Activated CD4-positive, alpha-beta T cell treated with anti-CD3 and anti-CD28 coated beads, Interleukin-2, amount 10 ng/mL, durations not matched to agents 24 days and 14 days (primary cell): ENCODE measurements at regions of chr14 and their contacts with region 1.

Region 1: GRCh38 chr14:76876076-76876475 is 49.9 kb downstream of the LRRC74A start:
- DNase-seq: peak; percentile 82
- H3K4me3 Mint-ChIP-seq: no peak overlapping the region
- H3K27ac Mint-ChIP-seq: no peak overlapping the region
- H3K4me1 Mint-ChIP-seq: peaks cover 2% of the 10 kb centered on the region
- H3K27me3 Mint-ChIP-seq: peaks cover 3% of the 10 kb centered on the region

Region 2: DNA sequence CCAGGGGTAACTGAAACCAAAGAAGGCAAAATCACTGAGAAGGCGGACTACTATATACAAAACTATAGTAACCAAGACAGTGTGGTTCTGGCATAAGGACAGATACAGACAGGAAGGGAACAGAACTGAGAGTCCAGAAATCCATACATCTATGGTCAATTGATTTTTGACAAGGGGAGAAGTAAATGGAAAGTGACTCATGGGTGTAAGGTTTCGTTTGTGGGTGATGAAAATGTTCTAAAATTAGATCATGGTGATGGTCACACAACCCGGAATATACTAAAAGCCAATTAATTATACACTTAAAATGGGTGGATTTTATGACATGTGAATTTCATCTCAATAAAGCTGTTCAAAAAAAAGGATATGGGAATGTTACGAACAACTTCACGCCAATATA is 82.1 kb before region 1 on chr14:
- intact Hi-C with region 1: no loop called
- DNase-seq: no peak
- H3K4me3 Mint-ChIP-seq: no peak overlapping the region
- H3K27ac Mint-ChIP-seq: no peak overlapping the region
- H3K4me1 Mint-ChIP-seq: no peaks in the 10 kb centered on the region
- H3K27me3 Mint-ChIP-seq: no peaks in the 10 kb centered on the region

Region 3: GRCh38 chr14:76829650-76830421 is 46.2 kb before region 1 on chr14:
- intact Hi-C with region 1: no loop called
- DNase-seq: no peak
- H3K4me3 Mint-ChIP-seq: no peak overlapping the region
- H3K27ac Mint-ChIP-seq: no peak overlapping the region
- H3K4me1 Mint-ChIP-seq: no peaks in the 10 kb centered on the region
- H3K27me3 Mint-ChIP-seq: peaks cover 9% of the 10 kb centered on the region

Region 4: GRCh38 chr14:77067632-77068514 is 191.8 kb after region 1 on chr14:
- intact Hi-C with region 1: loop called (anchors 1 kb)
- DNase-seq: peak; percentile 88
- H3K4me3 Mint-ChIP-seq: no peak overlapping the region
- H3K27ac Mint-ChIP-seq: no peak overlapping the region
- H3K4me1 Mint-ChIP-seq: peaks cover 3% of the 10 kb centered on the region
- H3K27me3 Mint-ChIP-seq: peaks cover 11% of the 10 kb centered on the region